Calu3 (cell line): ENCODE measurements at regions of chrX and their contacts with region 1.

Region 1: DNA sequence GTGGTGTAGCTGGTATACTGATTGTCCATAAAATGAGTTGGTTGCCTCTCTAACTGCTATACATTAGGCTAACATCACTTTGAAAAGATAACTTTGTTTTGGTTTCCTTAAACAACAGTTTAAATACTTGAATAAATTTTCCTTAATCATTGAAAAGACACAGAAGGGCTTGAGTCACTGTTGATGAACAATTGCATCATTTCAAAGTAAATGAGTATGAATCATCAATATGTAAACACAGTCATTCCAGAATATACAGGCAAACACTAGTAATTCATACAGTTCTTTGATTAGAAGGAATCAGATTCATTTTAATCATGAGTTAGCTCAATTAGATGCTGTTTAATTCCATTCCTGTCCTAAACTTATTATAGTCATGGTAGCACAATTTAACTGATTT is 160.6 kb downstream of the AFF2 start:
- DNase-seq: no peak
- H3K4me3 Mint-ChIP-seq: no peak overlapping the region
- H3K27ac Mint-ChIP-seq: peak overlapping the region; percentile 82
- H3K4me1 Mint-ChIP-seq: no peaks in the 10 kb centered on the region
- H3K27me3 Mint-ChIP-seq: no peaks in the 10 kb centered on the region
- CTCF ChIP-seq: no peak

Region 2: GRCh38 chrX:148601034-148601433 is 60.0 kb before region 1 on chrX:
- CTCF ChIA-PET with region 1: no interaction called
- intact Hi-C with region 1: loop called (anchors 5 kb)
- DNase-seq: no peak
- H3K4me3 Mint-ChIP-seq: no peak overlapping the region
- H3K27ac Mint-ChIP-seq: no peak overlapping the region
- H3K4me1 Mint-ChIP-seq: peaks cover 30% of the 10 kb centered on the region
- H3K27me3 Mint-ChIP-seq: no peaks in the 10 kb centered on the region
- CTCF ChIP-seq: no peak

Region 3: DNA sequence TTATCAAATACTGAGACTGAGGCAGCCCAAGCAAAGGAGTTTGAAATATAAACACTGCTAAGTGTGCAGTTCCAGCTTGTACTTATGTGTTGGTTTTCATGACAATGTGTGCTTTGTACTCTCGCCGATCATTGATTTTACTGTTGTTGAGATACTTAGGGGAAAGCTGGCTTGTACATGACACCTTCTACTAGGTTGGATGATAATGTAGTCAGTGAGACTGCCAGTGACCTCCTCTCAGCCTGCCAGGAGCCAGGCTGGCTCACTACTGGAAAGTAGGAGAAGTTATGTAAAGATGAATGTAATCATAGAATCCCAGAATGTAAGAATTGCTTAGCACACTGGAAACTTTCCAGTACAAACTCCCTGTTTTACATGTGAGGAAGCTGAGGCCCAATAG is 28.6 kb before region 1 on chrX:
- CTCF ChIA-PET with region 1: no interaction called
- intact Hi-C with region 1: loop called (anchors 2 kb)
- DNase-seq: peak; percentile 12
- H3K4me3 Mint-ChIP-seq: no peak overlapping the region
- H3K27ac Mint-ChIP-seq: peak overlapping the region; percentile 44
- H3K4me1 Mint-ChIP-seq: peaks cover 30% of the 10 kb centered on the region
- H3K27me3 Mint-ChIP-seq: no peaks in the 10 kb centered on the region
- CTCF ChIP-seq: no peak

Region 4: GRCh38 chrX:148691456-148691855 is 30.4 kb after region 1 on chrX:
- CTCF ChIA-PET with region 1: no interaction called
- intact Hi-C with region 1: no loop called
- DNase-seq: no peak
- H3K4me3 Mint-ChIP-seq: no peak overlapping the region
- H3K27ac Mint-ChIP-seq: no peak overlapping the region
- H3K4me1 Mint-ChIP-seq: no peaks in the 10 kb centered on the region
- H3K27me3 Mint-ChIP-seq: no peaks in the 10 kb centered on the region
- CTCF ChIP-seq: no peak